ENCODE measurements at regions of chr16 and their contacts with region 1.

Region 1: DNA sequence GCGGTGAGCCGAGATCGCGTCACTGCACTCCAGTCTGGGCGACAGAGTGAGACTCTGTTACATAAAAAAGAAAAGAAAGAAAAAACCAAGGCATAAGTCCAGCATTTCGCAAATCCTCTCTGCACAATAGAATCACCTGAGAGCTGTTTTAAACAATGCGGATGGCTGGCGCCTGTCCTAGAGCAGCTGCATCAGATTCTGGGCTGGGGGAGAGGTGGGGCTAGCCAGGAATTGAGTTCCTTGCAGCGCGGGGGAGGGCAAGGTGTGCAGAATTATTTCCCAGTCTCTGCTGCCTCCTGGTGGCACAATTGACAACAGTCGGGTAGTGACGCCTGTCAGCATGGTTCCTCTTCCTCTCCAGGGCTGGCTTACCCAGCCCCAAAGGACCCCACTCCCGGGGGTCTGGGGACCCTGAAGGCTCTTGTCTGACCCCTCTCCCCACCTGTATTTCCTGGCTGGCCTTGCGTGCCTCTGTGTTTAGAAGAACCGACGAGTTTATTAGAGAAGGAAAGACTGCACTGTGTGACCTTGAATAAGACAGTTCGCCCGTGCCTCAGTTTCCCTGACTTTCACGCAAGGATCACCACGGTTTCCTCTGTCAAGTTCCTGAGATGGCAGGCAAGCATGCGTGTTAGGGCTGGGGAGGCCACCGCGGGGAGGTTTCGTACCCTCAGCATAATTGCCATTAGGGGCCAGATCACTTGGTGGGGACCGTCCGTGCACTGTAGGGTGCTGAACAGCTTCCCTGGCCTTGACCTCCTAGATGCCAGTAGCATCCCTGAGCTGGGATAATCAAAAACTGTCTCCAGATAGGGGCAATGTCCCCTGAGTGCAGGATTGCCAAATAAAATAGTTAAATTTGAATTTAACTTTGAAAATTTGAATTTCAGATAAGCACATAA is 41.0 kb upstream of the PLCG2 start:
- DNase-seq: peak; percentile 87
- CTCF ChIP-seq: peak; percentile 91

Region 2: DNA sequence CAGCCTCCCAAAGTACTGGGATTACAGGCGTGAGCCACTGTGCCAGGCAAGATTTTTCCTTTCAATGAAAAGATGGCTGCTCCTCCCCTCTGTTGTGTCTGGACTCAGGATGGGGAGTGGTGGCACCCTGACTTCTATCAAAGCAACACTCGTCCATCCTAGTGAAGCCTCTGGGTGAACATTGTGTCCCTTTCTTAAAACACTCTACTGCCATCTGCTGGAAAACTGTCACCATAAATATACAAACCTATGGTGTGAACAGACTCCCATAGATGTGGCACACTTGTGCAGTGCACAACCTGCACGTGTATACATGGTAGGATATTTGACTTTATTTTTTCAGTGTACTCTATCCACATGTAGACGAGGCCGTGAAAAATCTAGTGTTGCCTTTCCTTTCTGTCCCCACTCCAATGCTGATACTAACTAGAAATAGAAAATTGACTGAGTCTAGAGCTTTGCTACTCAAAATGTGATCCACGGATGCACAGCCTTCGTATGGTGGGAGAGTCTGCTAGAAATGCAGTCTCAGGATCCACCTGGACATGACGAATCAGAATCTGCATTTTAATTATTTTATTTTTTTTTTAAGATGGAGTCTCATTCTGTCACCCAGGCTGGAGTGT is 14.9 kb before region 1 on chr16:
- CTCF ChIA-PET with region 1: interaction called, 10 read pairs
- POLR2A ChIA-PET with region 1: no interaction called
- DNase-seq: peak; percentile 72
- CTCF ChIP-seq: peak; percentile 48